Natural killer cell (primary cell): ENCODE measurements at regions of chr16 and their contacts with region 1.

Region 1: GRCh38 chr16:67561824-67562525 is 351 bp upstream of the CTCF start:
- DNase-seq: peak; percentile 93 to 98
- ATAC-seq: peak; percentile 75 to 90 (median 77)
- H3K4me3 ChIP-seq: peak overlapping the region; percentile 71
- H3K4me3 Mint-ChIP-seq: peak overlapping the region; percentile 95
- H3K27ac ChIP-seq: peak overlapping the region; percentile 87
- H3K27ac Mint-ChIP-seq: peak overlapping the region; percentile 93 to 95
- H3K4me1 ChIP-seq: peaks cover 23% of the 10 kb centered on the region
- H3K4me1 Mint-ChIP-seq: peaks cover 24 to 31% of the 10 kb centered on the region in 2 donors
- H3K27me3 ChIP-seq: no peaks in the 10 kb centered on the region
- H3K27me3 Mint-ChIP-seq: no peaks in the 10 kb centered on the region
- CTCF ChIP-seq: no peak

Region 2: GRCh38 chr16:67480833-67481560 is 81.0 kb before region 1 on chr16 and contains the start of gene ATP6V0D1:
- intact Hi-C with region 1: loop called (anchors 1 kb)
- DNase-seq: peak; percentile 100
- ATAC-seq: peak; percentile 81 to 97 (median 91)
- H3K4me3 ChIP-seq: peak within 1 kb of the TSS; percentile 87
- H3K4me3 Mint-ChIP-seq: peak within 1 kb of the TSS; percentile 100
- H3K27ac ChIP-seq: peak within 1 kb of the TSS; percentile 96
- H3K27ac Mint-ChIP-seq: peak within 1 kb of the TSS; percentile 100
- H3K4me1 ChIP-seq: peaks cover 42% of the 10 kb centered on the region
- H3K4me1 Mint-ChIP-seq: peaks cover 37 to 55% of the 10 kb centered on the region in 2 donors
- H3K27me3 ChIP-seq: no peaks in the 10 kb centered on the region
- H3K27me3 Mint-ChIP-seq: no peaks in the 10 kb centered on the region
- CTCF ChIP-seq: peak; percentile 80
- total RNA-seq, gene ATP6V0D1: 76.0 to 84.9 (median 83.3) TPM

Region 3: DNA sequence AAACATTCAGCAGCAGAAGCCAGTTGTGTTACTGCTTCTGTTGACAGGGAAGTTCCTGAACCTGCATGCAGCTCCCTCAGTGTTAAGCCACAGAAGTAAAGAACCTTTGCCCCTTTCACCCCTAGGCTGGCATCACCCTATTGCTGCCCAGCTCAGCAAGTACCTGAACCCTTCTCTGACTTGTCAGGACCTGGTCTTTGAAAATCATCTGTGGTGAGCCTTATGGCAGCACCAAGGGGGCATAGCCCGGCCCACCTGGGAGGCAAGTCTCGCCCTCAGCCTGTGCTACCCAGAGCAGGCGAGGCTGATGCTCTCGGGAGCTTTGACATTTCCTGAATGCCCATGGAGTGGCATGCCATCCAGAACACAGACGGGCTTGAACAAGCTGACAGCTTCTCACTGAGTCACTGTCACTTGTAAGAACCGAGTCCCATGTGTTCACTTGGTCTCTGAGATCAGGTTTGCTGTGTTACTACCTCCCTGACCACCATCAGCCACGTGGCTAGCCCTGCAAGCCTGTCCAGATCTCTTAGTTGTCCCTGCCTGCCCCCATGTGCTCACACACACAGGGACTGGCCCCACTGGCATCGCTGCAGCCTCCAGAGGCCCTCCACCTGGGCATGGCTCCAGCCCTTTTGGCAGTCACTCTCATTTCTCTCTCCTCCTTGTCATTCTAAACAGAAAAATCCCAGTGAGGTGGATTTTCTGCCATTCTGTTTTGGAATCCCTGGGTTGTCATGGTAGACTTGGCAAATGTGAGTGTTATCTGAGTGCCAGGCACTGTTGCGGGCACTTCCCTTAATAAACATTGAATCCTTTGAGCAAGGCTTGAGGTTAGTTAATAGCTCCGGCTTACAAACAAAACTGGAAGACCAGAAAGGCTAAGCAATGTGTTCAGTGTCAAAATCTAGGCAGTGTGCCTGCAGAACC is 80.1 kb after region 1 on chr16:
- intact Hi-C with region 1: loop called (anchors 5 kb)
- DNase-seq: no peak
- ATAC-seq: no peak
- H3K4me3 ChIP-seq: no peak overlapping the region
- H3K4me3 Mint-ChIP-seq: no peak overlapping the region
- H3K27ac ChIP-seq: no peak overlapping the region
- H3K27ac Mint-ChIP-seq: peak overlapping the region in 1 of 2 donors; percentile 9
- H3K4me1 ChIP-seq: peaks cover 22% of the 10 kb centered on the region
- H3K4me1 Mint-ChIP-seq: no peaks in the 10 kb centered on the region
- H3K27me3 ChIP-seq: no peaks in the 10 kb centered on the region
- H3K27me3 Mint-ChIP-seq: no peaks in the 10 kb centered on the region
- CTCF ChIP-seq: no peak

Region 4: DNA sequence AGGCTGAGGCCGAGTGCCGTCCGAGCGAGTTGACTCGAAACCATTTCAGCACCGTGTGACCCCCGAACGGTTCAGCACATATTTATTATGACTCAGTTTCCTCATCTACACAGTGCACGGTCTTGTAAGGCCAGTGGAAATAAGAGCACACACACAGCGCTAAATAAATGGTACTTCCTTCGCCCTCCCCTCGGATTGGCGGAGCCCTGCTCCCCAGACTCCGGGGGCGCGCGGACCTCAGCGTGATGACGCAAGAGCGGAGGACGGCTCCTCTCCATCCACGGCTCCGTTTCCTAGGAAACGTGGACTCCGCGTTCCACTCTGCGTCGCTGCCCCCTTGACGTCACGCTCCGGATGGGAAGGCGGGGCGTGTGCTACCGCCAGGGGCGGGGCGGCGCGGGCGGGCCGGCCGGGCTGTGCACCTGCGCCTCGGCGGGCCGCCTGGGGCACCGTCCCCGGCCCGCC is 98.6 kb after region 1 on chr16 and contains the start of gene PARD6A:
- intact Hi-C with region 1: loop called (anchors 2 kb)
- DNase-seq: peak; percentile 87 to 98
- ATAC-seq: peak; percentile 78 to 92 (median 85)
- H3K4me3 ChIP-seq: peak within 1 kb of the TSS; percentile 67
- H3K4me3 Mint-ChIP-seq: peak within 1 kb of the TSS; percentile 94
- H3K27ac ChIP-seq: peak within 1 kb of the TSS; percentile 91
- H3K27ac Mint-ChIP-seq: peak within 1 kb of the TSS; percentile 93 to 94
- H3K4me1 ChIP-seq: peaks cover 26% of the 10 kb centered on the region
- H3K4me1 Mint-ChIP-seq: peaks cover 0 to 33% of the 10 kb centered on the region in 2 donors
- H3K27me3 ChIP-seq: no peaks in the 10 kb centered on the region
- H3K27me3 Mint-ChIP-seq: no peaks in the 10 kb centered on the region
- CTCF ChIP-seq: no peak
- total RNA-seq, gene PARD6A: 3.1 to 4.4 (median 3.3) TPM